MCF 10A (cell line): ENCODE measurements at regions of chr20 and their contacts with region 1.

Region 1: GRCh38 chr20:16729565-16730456 is at the start of gene SNRPB2:
- DNase-seq: peak; percentile 93
- H3K4me3 Mint-ChIP-seq: peak within 1 kb of the TSS; percentile 100
- H3K27ac Mint-ChIP-seq: peak within 1 kb of the TSS; percentile 100
- H3K4me1 Mint-ChIP-seq: peaks cover 16% of the 10 kb centered on the region
- H3K27me3 Mint-ChIP-seq: peaks cover 21% of the 10 kb centered on the region
- CTCF ChIP-seq: no peak
- total RNA-seq, gene SNRPB2: 57.7 and 74.3 TPM in 2 replicates

Region 2: GRCh38 chr20:16528078-16528477 is 201.7 kb before region 1 on chr20:
- CTCF ChIA-PET with region 1: interaction called, 3 read pairs
- POLR2A ChIA-PET with region 1: interaction called, 3 read pairs
- intact Hi-C with region 1: loop called (anchors 2 kb)
- DNase-seq: peak; percentile 94
- H3K4me3 Mint-ChIP-seq: peak overlapping the region; percentile 40
- H3K27ac Mint-ChIP-seq: peak overlapping the region; percentile 91
- H3K4me1 Mint-ChIP-seq: peaks cover 34% of the 10 kb centered on the region
- H3K27me3 Mint-ChIP-seq: no peaks in the 10 kb centered on the region
- CTCF ChIP-seq: no peak

Region 3: GRCh38 chr20:16671753-16672152 is 58.1 kb before region 1 on chr20:
- CTCF ChIA-PET with region 1: no interaction called
- POLR2A ChIA-PET with region 1: no interaction called
- intact Hi-C with region 1: no loop called
- DNase-seq: no peak
- H3K4me3 Mint-ChIP-seq: no peak overlapping the region
- H3K27ac Mint-ChIP-seq: no peak overlapping the region
- H3K4me1 Mint-ChIP-seq: no peaks in the 10 kb centered on the region
- H3K27me3 Mint-ChIP-seq: no peaks in the 10 kb centered on the region
- CTCF ChIP-seq: no peak

Region 4: DNA sequence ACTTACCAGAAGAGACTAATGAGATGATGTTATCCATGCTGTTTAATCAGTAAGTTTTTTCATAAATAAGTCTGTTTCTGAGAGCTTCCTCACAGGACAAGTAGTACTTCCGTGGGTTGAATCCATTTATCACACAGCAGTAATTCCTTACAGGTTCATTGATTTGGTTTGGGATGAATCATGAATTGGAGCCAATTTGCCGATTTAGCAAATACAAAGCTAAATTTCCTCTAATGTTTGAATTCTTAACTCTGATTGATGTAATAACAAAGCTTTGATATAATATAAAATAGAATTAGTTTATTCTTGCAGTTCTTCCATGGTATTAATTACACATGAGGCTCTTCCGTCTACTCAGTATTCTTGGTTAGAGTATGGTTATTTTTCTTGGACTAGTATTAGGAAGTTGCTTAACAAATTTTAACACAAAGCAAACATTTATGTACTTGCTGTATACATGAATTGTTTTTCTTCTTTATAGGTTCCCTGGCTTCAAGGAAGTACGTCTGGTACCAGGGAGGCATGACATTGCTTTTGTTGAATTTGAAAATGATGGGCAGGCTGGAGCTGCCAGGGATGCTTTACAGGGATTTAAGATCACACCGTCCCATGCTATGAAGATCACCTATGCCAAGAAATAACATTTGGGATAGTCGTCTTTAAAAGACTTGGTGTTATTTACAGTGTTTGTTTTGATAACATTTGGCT is 10.7 kb after region 1 on chr20:
- CTCF ChIA-PET with region 1: interaction called, 4 read pairs
- POLR2A ChIA-PET with region 1: interaction called, 12 read pairs
- intact Hi-C with region 1: no loop called
- DNase-seq: no peak
- H3K4me3 Mint-ChIP-seq: no peak overlapping the region
- H3K27ac Mint-ChIP-seq: no peak overlapping the region
- H3K4me1 Mint-ChIP-seq: peaks cover 5% of the 10 kb centered on the region
- H3K27me3 Mint-ChIP-seq: no peaks in the 10 kb centered on the region
- CTCF ChIP-seq: no peak

Region 5: DNA sequence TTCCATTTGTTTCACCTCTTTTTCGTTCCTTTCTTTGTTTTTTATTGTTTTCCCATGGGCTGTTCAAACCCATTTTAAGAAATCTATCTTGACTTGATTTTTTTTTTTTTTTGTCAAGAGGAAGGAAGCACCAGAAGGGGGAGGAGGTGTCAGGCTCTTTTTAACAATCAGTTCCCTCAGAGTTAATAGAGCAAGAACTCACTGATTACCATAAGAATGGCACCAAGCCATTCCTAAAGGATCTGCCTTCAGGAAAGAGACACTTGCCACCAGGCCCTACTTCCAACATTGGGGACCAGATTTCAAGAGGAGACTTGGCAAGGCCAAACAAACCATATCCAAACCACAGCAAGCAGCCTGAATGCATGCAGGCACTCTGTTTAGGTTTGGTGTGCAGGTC is 186.4 kb after region 1 on chr20:
- CTCF ChIA-PET with region 1: no interaction called
- POLR2A ChIA-PET with region 1: no interaction called
- intact Hi-C with region 1: no loop called
- DNase-seq: no peak
- H3K4me3 Mint-ChIP-seq: no peak overlapping the region
- H3K27ac Mint-ChIP-seq: no peak overlapping the region
- H3K4me1 Mint-ChIP-seq: no peaks in the 10 kb centered on the region
- H3K27me3 Mint-ChIP-seq: no peaks in the 10 kb centered on the region
- CTCF ChIP-seq: no peak